Esophagus muscularis mucosa (tissue), 4 donors: ENCODE measurements at regions of chr1 and their contacts with region 1.

Region 1: GRCh38 chr1:10945991-10946509 is 66.4 kb upstream of the TARDBP start:
- DNase-seq: no peak
- H3K4me3 ChIP-seq: no peak overlapping the region
- H3K27ac ChIP-seq: no peak overlapping the region
- H3K4me1 ChIP-seq: peaks cover 10 to 30% (median 24%) of the 10 kb centered on the region in 4 donors
- H3K27me3 ChIP-seq: peaks cover 0 to 11% (median 0%) of the 10 kb centered on the region in 4 donors
- CTCF ChIP-seq: no peak
- EP300 ChIP-seq: no peak
- POLR2A ChIP-seq: no peak

Region 2: GRCh38 chr1:10494754-10495474 is 451.1 kb before region 1 on chr1:
- intact Hi-C with region 1: loop called (anchors 5 kb)
- DNase-seq: peak; percentile 93
- H3K4me3 ChIP-seq: peak overlapping the region; percentile 19 to 29 (median 25)
- H3K27ac ChIP-seq: peak overlapping the region in 1 of 4 donors; percentile 27
- H3K4me1 ChIP-seq: peaks cover 14 to 23% (median 20%) of the 10 kb centered on the region in 4 donors
- H3K27me3 ChIP-seq: no peaks in the 10 kb centered on the region
- CTCF ChIP-seq: peak; percentile 78 to 86 (median 85)
- EP300 ChIP-seq: no peak
- POLR2A ChIP-seq: no peak